Breast epithelium (tissue), 4 donors: ENCODE measurements at regions of chr10 and their contacts with region 1.

Region 1: DNA sequence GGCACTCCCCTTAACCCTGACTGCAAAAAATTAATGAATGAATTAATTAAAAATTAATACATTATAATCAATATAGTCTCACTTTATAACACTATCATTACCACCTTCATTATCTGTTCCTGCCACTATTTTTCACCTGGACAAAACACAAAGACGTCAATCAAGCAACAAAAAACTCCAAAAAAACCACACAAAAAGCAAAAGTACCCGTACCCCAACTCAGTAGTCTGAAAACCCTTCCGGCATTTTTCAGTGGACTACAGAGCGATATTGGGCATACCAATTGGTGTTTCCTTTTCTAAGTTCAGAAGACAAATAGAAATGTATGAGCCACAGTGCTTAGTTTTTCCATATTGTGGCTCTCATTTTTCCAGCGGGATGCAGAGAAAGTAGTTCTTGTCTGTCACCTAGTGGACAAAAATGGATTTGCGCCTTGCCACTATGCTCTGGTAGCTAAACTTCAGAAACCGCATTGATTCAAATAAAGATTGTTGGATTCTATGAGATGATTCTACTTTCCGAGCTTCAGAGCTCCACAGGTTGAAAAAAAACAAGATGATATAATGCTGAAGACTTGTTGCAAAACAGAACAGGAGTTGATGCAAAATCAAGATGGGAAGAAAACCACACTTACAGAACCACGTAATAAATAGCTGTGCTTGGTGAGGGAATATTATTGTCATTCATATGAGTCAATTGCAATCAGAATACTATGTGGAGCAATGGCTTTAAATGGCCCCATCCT is 50.6 kb upstream of the ITGB1 start:
- DNase-seq: peak in 1 of 2 donors; percentile 47
- H3K4me3 ChIP-seq: no peak overlapping the region
- H3K27ac ChIP-seq: no peak overlapping the region
- H3K4me1 ChIP-seq: peaks cover 0 to 4% of the 10 kb centered on the region in 2 donors
- H3K27me3 ChIP-seq: no peaks in the 10 kb centered on the region
- CTCF ChIP-seq: peak; percentile 88 to 98 (median 98)
- POLR2A ChIP-seq: no peak

Region 2: DNA sequence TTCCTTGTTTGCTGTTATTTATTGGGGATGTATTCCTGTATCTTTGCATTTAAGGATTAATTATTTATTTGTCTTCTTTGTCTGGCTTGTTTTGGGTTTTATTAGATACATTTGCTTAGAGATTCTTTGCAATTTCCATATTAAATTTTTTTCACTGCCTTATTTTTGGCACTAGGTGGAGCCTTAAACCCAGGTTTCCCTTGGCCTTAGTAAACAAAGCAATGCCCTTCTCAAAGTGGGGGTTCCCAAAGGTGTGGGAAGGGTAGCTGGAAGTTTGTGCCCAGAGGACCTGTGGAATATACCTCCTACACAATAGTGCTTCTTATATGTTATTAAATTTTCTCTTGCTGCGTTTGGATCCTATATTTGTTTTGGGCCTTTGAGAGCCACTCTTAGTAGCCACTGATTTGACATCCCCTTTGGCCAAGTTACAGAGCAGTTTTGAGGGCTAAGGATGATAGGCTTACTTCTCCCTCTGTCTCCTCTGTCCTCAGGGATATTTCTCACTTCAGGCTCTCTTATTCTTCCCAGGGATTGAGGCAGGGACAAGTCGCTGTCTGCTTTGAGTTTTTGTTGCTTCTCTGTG is 213.0 kb before region 1 on chr10:
- intact Hi-C with region 1: loop called (anchors 10 kb)
- DNase-seq: no peak
- H3K4me3 ChIP-seq: no peak overlapping the region
- H3K27ac ChIP-seq: no peak overlapping the region
- H3K4me1 ChIP-seq: no peaks in the 10 kb centered on the region
- H3K27me3 ChIP-seq: no peaks in the 10 kb centered on the region
- CTCF ChIP-seq: peak; percentile 39 to 71 (median 62)
- POLR2A ChIP-seq: no peak

Region 3: DNA sequence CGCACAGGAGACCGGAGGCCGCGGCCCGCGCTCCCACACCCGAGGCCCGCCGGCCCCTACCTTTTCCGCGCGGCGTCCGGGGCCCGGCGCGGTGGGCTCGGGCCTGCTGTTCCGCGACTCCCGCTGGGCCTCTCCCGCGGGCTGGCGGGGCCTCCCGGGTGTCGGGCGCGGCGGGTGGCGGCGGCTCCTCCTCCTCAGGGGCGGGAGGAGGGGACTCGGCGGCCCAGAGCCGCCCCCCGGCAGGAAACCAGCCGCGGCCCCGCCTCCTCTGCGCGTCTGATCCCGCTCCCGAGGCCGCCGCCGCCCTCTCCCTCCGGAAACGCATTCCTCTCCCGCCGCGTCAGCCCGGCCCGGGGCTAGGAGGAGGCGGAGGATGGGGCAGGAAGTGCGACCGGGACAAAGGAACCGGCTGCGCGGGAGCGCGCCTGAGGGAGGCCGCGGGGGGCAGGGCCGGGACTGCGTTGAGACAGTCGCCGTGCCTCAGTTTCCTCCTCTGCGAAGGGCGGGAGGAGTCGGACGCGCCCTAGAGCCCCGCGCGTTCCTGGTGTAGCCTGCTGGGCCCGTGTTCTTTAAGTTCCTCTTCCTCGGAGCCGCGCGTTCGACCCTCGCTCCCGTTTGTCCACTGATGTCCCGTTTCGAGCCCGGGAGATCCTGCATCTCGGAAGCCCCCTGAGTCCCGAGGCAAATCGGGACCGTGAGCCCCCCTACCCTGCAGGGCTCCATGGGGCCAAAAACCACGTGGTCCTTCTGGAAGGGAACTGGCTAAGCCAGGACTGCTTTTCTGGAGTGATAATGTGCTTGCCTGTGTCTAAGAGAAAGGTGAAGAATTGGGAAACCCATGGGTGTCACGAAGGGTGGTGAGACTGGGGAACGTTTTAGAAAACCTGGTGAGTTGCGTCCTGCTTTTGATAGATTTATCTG is 50.3 kb before region 1 on chr10 and contains the start of gene ITGB1:
- intact Hi-C with region 1: loop called (anchors 10 kb)
- DNase-seq: peak; percentile 97
- H3K4me3 ChIP-seq: peak within 1 kb of the TSS; percentile 89 to 98 (median 97)
- H3K27ac ChIP-seq: peak within 1 kb of the TSS; percentile 99
- H3K4me1 ChIP-seq: peaks cover 0 to 5% of the 10 kb centered on the region in 2 donors
- H3K27me3 ChIP-seq: no peaks in the 10 kb centered on the region
- CTCF ChIP-seq: peak in 1 of 3 donors; percentile 37
- POLR2A ChIP-seq: peak; percentile 94
- total RNA-seq, gene ITGB1: 438 to 1,565 (median 480) TPM

Region 4: DNA sequence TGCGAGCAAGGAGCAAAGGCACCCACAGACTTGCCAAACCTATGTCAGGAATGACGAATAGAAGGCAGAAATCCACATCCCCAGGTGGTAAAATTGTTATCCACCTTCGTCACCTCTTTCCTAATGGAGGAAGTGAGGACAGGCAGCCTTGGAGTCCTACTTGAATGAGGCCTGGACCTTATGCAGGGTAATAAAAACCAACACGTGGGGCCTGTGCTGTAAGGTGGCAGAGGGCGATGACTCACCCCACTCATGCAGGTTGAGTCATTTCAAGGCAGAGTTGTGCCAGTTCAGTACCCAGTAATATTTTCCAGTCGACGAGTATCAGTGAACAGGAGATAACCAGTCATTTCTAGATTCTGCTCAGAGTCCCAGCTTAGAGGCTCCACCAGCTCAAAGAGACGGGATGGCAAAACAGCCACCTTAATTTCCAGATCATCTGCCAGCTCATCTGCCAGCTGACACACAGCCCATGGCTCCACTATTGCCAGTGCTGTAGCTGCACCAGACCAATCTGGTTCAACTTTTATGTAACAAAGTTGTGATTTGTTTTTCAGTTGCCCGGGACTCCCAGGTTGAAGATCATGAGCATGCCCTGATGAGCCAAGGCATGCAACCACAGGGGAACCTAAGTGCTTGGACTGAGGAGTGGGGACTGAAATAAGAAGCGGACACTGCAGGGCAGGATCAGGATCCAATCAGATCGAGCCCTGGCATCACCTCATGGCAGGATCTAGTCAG is 125.5 kb after region 1 on chr10:
- intact Hi-C with region 1: no loop called
- DNase-seq: peak in 1 of 2 donors; percentile 47
- H3K4me3 ChIP-seq: no peak overlapping the region
- H3K27ac ChIP-seq: no peak overlapping the region
- H3K4me1 ChIP-seq: no peaks in the 10 kb centered on the region
- H3K27me3 ChIP-seq: no peaks in the 10 kb centered on the region
- CTCF ChIP-seq: no peak
- POLR2A ChIP-seq: no peak

Region 5: GRCh38 chr10:34655286-34656170 is 1646.9 kb after region 1 on chr10:
- intact Hi-C with region 1: loop called (anchors 10 kb)
- DNase-seq: peak in 1 of 2 donors; percentile 36
- H3K4me3 ChIP-seq: no peak overlapping the region
- H3K27ac ChIP-seq: no peak overlapping the region
- H3K4me1 ChIP-seq: no peaks in the 10 kb centered on the region
- H3K27me3 ChIP-seq: no peaks in the 10 kb centered on the region
- CTCF ChIP-seq: peak; percentile 35 to 69 (median 51)
- POLR2A ChIP-seq: no peak